H1 (cell line): ENCODE measurements at regions of chr1 and their contacts with region 1.

Region 1: GRCh38 chr1:37094302-37094701 is 60.0 kb upstream of the GRIK3 start:
- DNase-seq: no peak
- H3K4me3 ChIP-seq: no peak overlapping the region
- H3K27ac ChIP-seq: no peak overlapping the region
- H3K4me1 ChIP-seq: no peaks in the 10 kb centered on the region; a peak in 2 of 7 replicates
- H3K27me3 ChIP-seq: no peaks in the 10 kb centered on the region; a peak in 1 of 7 replicates
- CTCF ChIP-seq: no peak
- EP300 ChIP-seq: no peak
- POLR2A ChIP-seq: no peak
- RAD21 ChIP-seq: no peak

Region 2: DNA sequence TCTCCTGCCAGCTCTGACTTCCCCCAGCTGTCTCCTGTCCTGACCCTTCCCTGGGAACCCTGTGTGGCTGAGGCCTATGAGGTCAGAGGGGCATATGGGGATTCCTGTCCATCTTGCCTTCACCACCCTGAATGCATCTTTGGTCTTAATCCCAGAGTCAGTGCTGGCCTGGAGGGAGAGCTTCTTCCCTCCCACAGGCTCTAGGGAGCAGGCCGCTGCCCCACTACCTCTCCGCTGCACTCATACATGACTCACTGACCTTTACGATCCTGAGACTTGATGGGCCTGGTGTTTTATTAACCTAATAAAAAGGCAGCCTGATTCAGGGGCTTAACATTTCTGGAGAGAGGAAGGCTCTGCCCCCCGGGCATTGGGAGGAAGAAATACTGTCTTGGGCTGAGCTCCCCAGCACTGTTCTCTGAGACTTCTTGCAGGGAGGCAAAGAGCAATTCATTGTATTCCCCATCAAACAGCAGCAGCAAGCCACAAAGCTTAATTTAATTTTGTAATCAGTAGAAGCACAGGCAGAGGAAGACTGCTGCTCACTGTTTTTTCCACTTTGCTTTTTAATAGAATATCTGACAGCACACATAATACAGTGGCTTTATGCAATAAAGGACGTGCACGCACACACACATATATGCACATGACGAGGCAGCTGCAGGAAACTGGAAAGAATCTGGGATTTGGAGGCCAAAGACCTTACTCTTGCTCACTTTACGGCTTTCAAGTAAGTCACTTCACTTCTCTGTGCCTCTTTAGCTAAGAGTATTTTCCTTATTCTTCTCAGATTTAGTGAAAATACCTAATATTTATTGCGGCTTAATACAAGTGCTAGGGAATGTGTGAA is 29.2 kb after region 1 on chr1:
- CTCF ChIA-PET with region 1: interaction called, 10 read pairs
- POLR2A ChIA-PET with region 1: no interaction called
- DNase-seq: no peak
- H3K4me3 ChIP-seq: no peak overlapping the region
- H3K27ac ChIP-seq: no peak overlapping the region
- H3K4me1 ChIP-seq: no peaks in the 10 kb centered on the region
- H3K27me3 ChIP-seq: no peaks in the 10 kb centered on the region; a peak in 1 of 7 replicates
- CTCF ChIP-seq: no peak
- EP300 ChIP-seq: no peak
- POLR2A ChIP-seq: no peak
- RAD21 ChIP-seq: no peak